Activated naive CD4-positive, alpha-beta T cell treated with anti-CD3 and anti-CD28 coated beads, Interleukin-2, amount 10 ng/mL, durations not matched to agents 7 days and 5 days (primary cell): ENCODE measurements at regions of chr5 and their contacts with region 1.

Region 1: GRCh38 chr5:121949867-121950266 is 11.9 kb upstream of the SRFBP1 start:
- DNase-seq: peak; percentile 33
- H3K4me3 Mint-ChIP-seq: no peak overlapping the region
- H3K27ac Mint-ChIP-seq: no peak overlapping the region
- H3K4me1 Mint-ChIP-seq: no peaks in the 10 kb centered on the region
- H3K27me3 Mint-ChIP-seq: no peaks in the 10 kb centered on the region

Region 2: DNA sequence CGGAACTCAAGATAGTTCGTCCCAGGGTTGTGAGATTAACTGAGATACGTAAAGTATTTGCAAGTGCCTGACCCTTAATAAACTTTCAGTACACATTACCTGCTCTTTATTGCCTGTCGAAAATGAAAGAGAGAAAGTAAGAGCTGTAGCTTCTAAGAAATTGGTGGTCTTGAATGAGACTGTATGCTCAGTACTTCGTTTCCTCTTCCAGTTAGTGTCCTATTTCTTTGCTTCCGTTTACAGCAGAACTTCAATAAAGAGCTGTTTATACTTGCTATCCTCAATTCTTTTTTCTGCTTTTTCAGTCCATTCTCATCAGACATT is 12.4 kb after region 1 on chr5:
- CTCF ChIA-PET with region 1: interaction called, 25 read pairs
- DNase-seq: no peak
- H3K4me3 Mint-ChIP-seq: peak overlapping the region; percentile 93
- H3K27ac Mint-ChIP-seq: peak overlapping the region; percentile 89
- H3K4me1 Mint-ChIP-seq: peaks cover 33% of the 10 kb centered on the region
- H3K27me3 Mint-ChIP-seq: peaks cover 4% of the 10 kb centered on the region